ENCODE measurements at regions of chr17 and their contacts with region 1.

Region 1: GRCh38 chr17:18038861-18039534 is at the starts of genes ATPAF2 and GID4:
- DNase-seq: peak; percentile 100
- ATAC-seq: peak; percentile 91
- H3K4me3 Mint-ChIP-seq: peak within 1 kb of the TSS; percentile 91
- H3K27ac Mint-ChIP-seq: peak within 1 kb of the TSS; percentile 92
- H3K4me1 Mint-ChIP-seq: peaks cover 49% of the 10 kb centered on the region
- H3K27me3 Mint-ChIP-seq: no peaks in the 10 kb centered on the region
- total RNA-seq, gene ATPAF2: 32.9 to 40.3 TPM
- total RNA-seq, gene GID4: 6.7 to 7.7 TPM

Region 2: GRCh38 chr17:17681187-17681848 is 357.7 kb before region 1 on chr17 and contains the start of gene RAI1:
- CTCF ChIA-PET with region 1: interaction called, 3 read pairs
- POLR2A ChIA-PET with region 1: no interaction called
- intact Hi-C with region 1: loop called (anchors 1 to 2 kb)
- DNase-seq: peak; percentile 84
- ATAC-seq: peak; percentile 63
- H3K4me3 Mint-ChIP-seq: peak within 1 kb of the TSS; percentile 86
- H3K27ac Mint-ChIP-seq: peak within 1 kb of the TSS; percentile 86
- H3K4me1 Mint-ChIP-seq: peaks cover 27% of the 10 kb centered on the region
- H3K27me3 Mint-ChIP-seq: no peaks in the 10 kb centered on the region
- total RNA-seq, gene RAI1: 13.6 to 16.4 TPM

Region 3: GRCh38 chr17:17739388-17740066 is 299.5 kb before region 1 on chr17:
- CTCF ChIA-PET with region 1: no interaction called
- POLR2A ChIA-PET with region 1: no interaction called
- intact Hi-C with region 1: no loop called
- DNase-seq: no peak
- ATAC-seq: no peak
- H3K4me3 Mint-ChIP-seq: no peak overlapping the region
- H3K27ac Mint-ChIP-seq: no peak overlapping the region
- H3K4me1 Mint-ChIP-seq: peaks cover 28% of the 10 kb centered on the region
- H3K27me3 Mint-ChIP-seq: no peaks in the 10 kb centered on the region

Region 4: DNA sequence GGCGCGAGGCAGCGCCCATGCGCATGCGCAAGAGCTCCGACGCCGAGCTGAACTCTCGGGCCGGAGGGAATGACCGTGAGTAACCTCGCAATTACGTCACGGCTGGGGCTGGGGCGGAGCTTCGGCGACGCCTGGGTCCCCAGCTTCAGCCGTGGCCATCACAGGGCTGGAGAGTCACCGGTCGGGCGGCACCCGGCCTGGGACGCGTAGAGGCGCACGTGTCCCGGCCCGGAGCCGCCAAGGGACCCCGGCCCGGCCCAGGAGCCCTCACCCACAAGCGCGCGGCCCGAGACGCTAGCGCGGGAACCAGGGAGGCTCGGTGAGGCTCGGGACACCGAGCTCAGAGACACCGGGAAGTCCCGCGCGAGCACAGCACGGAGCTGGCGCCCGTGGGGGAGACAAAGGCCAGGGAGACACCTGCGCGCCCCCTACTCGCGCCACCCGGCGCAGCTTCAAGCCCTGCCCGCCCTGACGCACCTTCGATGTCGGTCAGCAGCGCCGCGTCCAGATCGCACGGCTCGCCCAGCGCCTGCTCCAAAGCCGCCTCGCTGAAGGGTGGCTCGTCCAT is 202.7 kb before region 1 on chr17:
- CTCF ChIA-PET with region 1: interaction called, 3 read pairs
- POLR2A ChIA-PET with region 1: no interaction called
- intact Hi-C with region 1: loop called in 1 of 2 experiments (anchors 1 kb)
- DNase-seq: peak; percentile 99
- ATAC-seq: peak; percentile 74
- H3K4me3 Mint-ChIP-seq: peak overlapping the region; percentile 94
- H3K27ac Mint-ChIP-seq: peak overlapping the region; percentile 98
- H3K4me1 Mint-ChIP-seq: peaks cover 74% of the 10 kb centered on the region
- H3K27me3 Mint-ChIP-seq: no peaks in the 10 kb centered on the region

Region 5: GRCh38 chr17:17959520-17960361 is 79.3 kb before region 1 on chr17:
- CTCF ChIA-PET with region 1: interaction called, 10 read pairs
- POLR2A ChIA-PET with region 1: interaction called, 3 read pairs
- intact Hi-C with region 1: loop called in 1 of 2 experiments (anchors 1 kb)
- DNase-seq: peak; percentile 67
- ATAC-seq: peak; percentile 61
- H3K4me3 Mint-ChIP-seq: peak overlapping the region; percentile 71
- H3K27ac Mint-ChIP-seq: peak overlapping the region; percentile 95
- H3K4me1 Mint-ChIP-seq: peaks cover 69% of the 10 kb centered on the region
- H3K27me3 Mint-ChIP-seq: no peaks in the 10 kb centered on the region

Region 6: DNA sequence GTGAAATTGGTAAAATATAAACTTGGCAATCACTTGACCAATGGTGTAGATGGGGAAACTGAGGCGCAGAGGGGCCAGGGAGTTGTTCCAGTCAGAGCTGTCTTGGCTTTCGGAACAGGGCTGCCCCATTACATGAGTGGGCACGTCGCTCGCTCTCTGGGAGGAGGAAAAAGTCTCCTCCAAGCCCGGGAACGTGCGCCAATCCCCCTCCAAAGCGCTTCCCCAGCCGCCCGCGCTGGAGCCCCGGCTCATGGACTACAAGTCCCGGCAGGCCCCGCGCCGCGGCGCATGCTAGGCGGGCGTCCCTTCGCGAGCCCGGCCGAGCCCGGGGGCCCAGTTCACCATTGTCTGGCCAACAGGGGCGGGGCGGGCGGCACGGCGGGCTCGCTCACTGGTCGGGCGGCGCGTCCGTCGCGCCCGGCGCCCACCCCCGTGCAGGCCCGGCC is 186.1 kb after region 1 on chr17:
- CTCF ChIA-PET with region 1: interaction called, 3 read pairs
- POLR2A ChIA-PET with region 1: no interaction called
- intact Hi-C with region 1: loop called in 1 of 2 experiments (anchors 1 kb)
- DNase-seq: peak; percentile 99
- ATAC-seq: peak; percentile 98
- H3K4me3 Mint-ChIP-seq: peak overlapping the region; percentile 56
- H3K27ac Mint-ChIP-seq: peak overlapping the region; percentile 55
- H3K4me1 Mint-ChIP-seq: peaks cover 18% of the 10 kb centered on the region
- H3K27me3 Mint-ChIP-seq: no peaks in the 10 kb centered on the region

Region 7: DNA sequence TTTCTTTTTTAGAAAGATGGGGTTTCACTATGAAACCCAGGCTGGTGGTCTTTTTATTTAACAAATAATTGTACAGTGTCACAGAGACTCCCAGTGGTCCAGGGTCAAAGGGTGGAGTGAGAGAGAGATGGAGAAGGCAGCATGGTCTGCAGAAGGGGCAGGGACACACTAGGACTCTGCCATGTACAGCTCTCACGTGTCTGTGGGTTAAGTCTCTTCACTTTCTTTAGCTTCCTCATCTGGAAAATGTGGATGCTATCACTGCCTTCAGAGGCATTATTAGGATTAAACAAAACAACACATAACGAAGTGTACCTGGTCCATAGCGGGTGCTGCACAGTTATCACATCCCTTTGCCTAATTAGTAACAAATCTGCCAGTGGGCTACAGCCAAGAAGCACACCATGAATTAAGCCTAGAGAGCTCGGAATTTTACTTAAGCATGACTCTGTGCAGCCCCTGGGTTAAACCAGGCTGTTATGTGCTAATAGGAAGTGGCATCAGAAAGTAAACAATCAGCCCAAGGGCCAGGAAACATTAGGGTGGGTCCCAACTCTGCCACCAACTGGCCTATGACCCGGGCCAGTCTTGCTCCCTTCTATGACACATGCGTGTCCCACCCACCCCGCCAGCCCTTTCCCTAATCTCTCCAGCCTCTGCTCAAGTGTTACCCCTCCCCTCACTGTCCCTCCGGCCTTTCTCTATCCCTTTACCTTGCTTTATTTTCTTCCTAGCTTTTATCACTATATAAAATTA is 261.9 kb after region 1 on chr17:
- CTCF ChIA-PET with region 1: no interaction called
- POLR2A ChIA-PET with region 1: no interaction called
- intact Hi-C with region 1: no loop called
- DNase-seq: no peak
- ATAC-seq: no peak
- H3K4me3 Mint-ChIP-seq: no peak overlapping the region
- H3K27ac Mint-ChIP-seq: no peak overlapping the region
- H3K4me1 Mint-ChIP-seq: no peaks in the 10 kb centered on the region
- H3K27me3 Mint-ChIP-seq: no peaks in the 10 kb centered on the region

Measured in activated CD4-positive, alpha-beta T cell treated with anti-CD3 and anti-CD28 coated beads for 36 hours (primary cell).